Adrenal gland (tissue), 19 donors: ENCODE measurements at regions of chr19 and their contacts with region 1.

Region 1: GRCh38 chr19:32971715-32972540 is at the starts of genes CEP89 and FAAP24:
- DNase-seq: peak; percentile 98 to 100 (median 99)
- H3K4me3 ChIP-seq: peak within 1 kb of the TSS; percentile 43 to 95 (median 80)
- H3K27ac ChIP-seq: peak within 1 kb of the TSS in 3 of 5 donors; percentile 35 to 84 (median 36)
- H3K4me1 ChIP-seq: peaks cover 0 to 12% of the 10 kb centered on the region in 2 donors
- H3K27me3 ChIP-seq: no peaks in the 10 kb centered on the region
- CTCF ChIP-seq: peak in 3 of 6 experiments; percentile 11 to 39 (median 30)
- POLR2A ChIP-seq: no peak
- total RNA-seq, gene CEP89: 9.2 to 20.1 (median 14.1) TPM
- total RNA-seq, gene FAAP24: 1.2 to 4.9 (median 2.8) TPM

Region 2: GRCh38 chr19:32580901-32581703 is 390.8 kb before region 1 on chr19 and contains the start of gene PDCD5:
- intact Hi-C with region 1: loop called in 1 of 2 experiments (anchors 10 kb)
- DNase-seq: peak; percentile 95 to 98 (median 97)
- H3K4me3 ChIP-seq: peak within 1 kb of the TSS; percentile 46 to 99 (median 72)
- H3K27ac ChIP-seq: peak within 1 kb of the TSS in 4 of 5 donors; percentile 85 to 92 (median 90)
- H3K4me1 ChIP-seq: peaks cover 0 to 12% of the 10 kb centered on the region in 2 donors
- H3K27me3 ChIP-seq: no peaks in the 10 kb centered on the region
- CTCF ChIP-seq: no peak
- POLR2A ChIP-seq: peak; percentile 72 to 87
- total RNA-seq, gene PDCD5: 56.4 to 213 (median 99.0) TPM

Region 3: GRCh38 chr19:32895384-32895783 is 76.5 kb before region 1 on chr19:
- intact Hi-C with region 1: no loop called
- DNase-seq: no peak
- H3K4me3 ChIP-seq: no peak overlapping the region
- H3K27ac ChIP-seq: no peak overlapping the region
- H3K4me1 ChIP-seq: no peaks in the 10 kb centered on the region
- H3K27me3 ChIP-seq: no peaks in the 10 kb centered on the region
- CTCF ChIP-seq: no peak
- POLR2A ChIP-seq: no peak

Region 4: DNA sequence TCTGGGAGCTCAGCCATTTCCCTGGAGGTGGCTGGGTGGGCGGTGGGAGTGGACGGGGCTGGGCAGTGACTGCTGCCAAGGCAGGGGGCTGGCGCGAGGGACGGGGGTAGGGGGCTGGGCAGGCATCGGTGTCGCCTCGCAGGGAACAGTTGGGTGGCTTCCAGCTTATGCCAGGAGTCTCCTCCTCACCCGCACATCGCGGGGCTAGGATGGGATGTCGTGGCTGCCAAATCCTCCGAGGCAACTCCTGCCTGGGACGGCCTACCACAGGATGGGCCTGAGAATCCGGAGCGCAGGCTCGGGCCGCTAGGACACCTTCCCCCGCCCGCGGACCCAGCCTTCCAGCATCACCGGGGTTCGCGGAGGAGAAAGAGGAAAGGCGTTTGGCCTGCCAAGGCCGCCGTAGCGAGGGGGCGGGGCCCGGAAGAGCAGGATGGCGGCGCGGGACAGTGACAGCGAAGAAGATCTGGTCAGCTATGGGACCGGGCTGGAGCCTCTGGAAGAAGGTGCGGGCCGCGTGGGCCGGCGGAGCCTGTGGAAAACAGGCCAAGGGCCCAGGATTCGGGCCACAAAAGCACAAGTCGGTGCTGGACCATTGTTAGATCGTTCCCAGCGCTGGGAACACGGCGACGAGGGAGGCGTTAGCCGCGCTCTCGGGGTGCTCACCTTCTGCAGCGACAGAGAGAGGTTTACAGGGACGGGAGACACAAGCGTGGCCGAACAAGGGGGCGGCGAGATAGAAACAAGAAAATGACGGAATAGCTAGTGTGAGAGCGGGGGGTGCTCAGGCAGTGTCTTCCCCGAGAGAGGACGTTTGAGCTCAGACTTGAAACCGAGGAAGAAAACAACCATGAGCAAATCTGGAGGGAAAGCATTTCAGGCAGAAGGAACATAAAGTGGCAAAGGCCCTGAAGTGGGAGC is 109.1 kb after region 1 on chr19 and contains the start of gene GPATCH1:
- intact Hi-C with region 1: loop called in 1 of 2 experiments (anchors 10 kb)
- DNase-seq: peak; percentile 84 to 91 (median 90)
- H3K4me3 ChIP-seq: peak within 1 kb of the TSS; percentile 57 to 87 (median 70)
- H3K27ac ChIP-seq: peak within 1 kb of the TSS in 4 of 5 donors; percentile 19 to 85 (median 60)
- H3K4me1 ChIP-seq: peaks cover 6 to 12% of the 10 kb centered on the region in 2 donors
- H3K27me3 ChIP-seq: no peaks in the 10 kb centered on the region
- CTCF ChIP-seq: no peak
- POLR2A ChIP-seq: no peak
- total RNA-seq, gene GPATCH1: 4.6 to 11.6 (median 6.8) TPM

Region 5: DNA sequence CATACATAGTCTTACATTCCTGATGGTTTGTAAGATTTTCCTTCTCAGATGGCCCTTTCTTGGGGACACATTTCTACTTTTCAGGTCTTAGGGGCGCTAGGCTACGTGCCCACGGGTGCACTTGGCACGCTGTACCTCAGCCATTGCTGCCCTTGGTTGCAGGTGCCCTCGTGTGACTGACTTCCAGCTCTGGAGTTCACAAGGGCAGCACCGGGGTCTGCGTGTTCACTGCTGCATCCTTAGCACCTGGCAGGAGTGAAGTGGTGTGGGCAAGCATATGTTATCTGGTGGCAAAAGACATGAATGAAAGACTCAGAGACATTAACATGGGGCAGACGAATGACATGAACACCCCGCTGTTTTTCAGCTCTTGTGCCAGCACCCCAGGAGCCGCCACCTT is 146.7 kb after region 1 on chr19:
- intact Hi-C with region 1: loop called in 1 of 2 experiments (anchors 5 kb)
- DNase-seq: no peak
- H3K4me3 ChIP-seq: no peak overlapping the region
- H3K27ac ChIP-seq: no peak overlapping the region
- H3K4me1 ChIP-seq: no peaks in the 10 kb centered on the region
- H3K27me3 ChIP-seq: no peaks in the 10 kb centered on the region
- CTCF ChIP-seq: no peak
- POLR2A ChIP-seq: no peak

Region 6: DNA sequence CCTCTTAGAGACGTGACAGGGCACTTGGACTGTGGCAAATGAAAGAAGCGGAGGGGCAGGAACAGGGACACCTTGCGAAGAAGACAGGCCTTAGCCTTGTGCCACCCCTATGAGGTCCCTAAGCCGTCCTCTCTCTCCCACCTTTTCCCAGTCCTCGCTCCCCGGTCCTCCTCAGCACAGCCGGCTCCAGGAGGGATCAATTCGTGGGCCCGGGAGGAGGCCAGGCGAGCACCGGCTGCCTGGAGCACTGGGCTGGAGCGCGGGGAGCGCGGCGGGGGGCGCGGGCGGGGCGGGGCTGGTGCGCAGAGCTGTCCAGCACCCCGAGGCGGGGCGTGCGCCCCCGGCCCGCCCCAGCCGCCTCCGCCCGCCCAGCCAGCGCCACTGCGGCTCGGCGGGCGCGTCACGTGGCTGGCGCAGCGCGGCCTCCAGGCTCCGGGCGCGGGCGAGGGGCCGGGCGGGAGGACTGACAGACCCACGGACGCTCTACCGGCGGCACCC is 222.0 kb after region 1 on chr19 and contains the start of gene LRP3:
- intact Hi-C with region 1: loop called in 1 of 2 experiments (anchors 10 kb)
- DNase-seq: peak in 5 of 7 donors; percentile 46 to 64 (median 53)
- H3K4me3 ChIP-seq: peak within 1 kb of the TSS; percentile 35 to 91 (median 58)
- H3K27ac ChIP-seq: peak within 1 kb of the TSS; percentile 21 to 86 (median 67)
- H3K4me1 ChIP-seq: peaks cover 9% of the 10 kb centered on the region in 2 donors
- H3K27me3 ChIP-seq: no peaks in the 10 kb centered on the region
- CTCF ChIP-seq: no peak
- POLR2A ChIP-seq: no peak
- total RNA-seq, gene LRP3: 10.1 to 92.8 (median 62.4) TPM